ENCODE measurements at regions of chr17 and their contacts with region 1.

Region 1: GRCh38 chr17:6191405-6192324 is 121.5 kb downstream of the WSCD1 start:
- DNase-seq: no peak
- H3K4me3 ChIP-seq: no peak overlapping the region
- CTCF ChIP-seq: no peak

Region 2: GRCh38 chr17:6159541-6160228 is 32.0 kb before region 1 on chr17:
- in situ Hi-C with region 1: loop called (anchors 5 kb)
- DNase-seq: no peak
- H3K4me3 ChIP-seq: no peak overlapping the region
- CTCF ChIP-seq: no peak

Region 3: GRCh38 chr17:6257336-6257735 is 65.7 kb after region 1 on chr17:
- in situ Hi-C with region 1: no loop called
- DNase-seq: peak; percentile 57
- H3K4me3 ChIP-seq: no peak overlapping the region
- CTCF ChIP-seq: no peak

Measured in astrocyte of the cerebellum (primary cell).